ENCODE measurements at regions of chr12 and their contacts with region 1.

Region 1: GRCh38 chr12:1680804-1681492 is 9.9 kb upstream of the ADIPOR2 start:
- DNase-seq: no peak
- H3K4me3 Mint-ChIP-seq: no peak overlapping the region
- H3K27ac Mint-ChIP-seq: no peak overlapping the region
- H3K4me1 Mint-ChIP-seq: no peaks in the 10 kb centered on the region
- H3K27me3 Mint-ChIP-seq: no peaks in the 10 kb centered on the region
- CTCF ChIP-seq: no peak

Region 2: GRCh38 chr12:1605129-1606020 is 75.6 kb before region 1 on chr12:
- CTCF ChIA-PET with region 1: no interaction called
- POLR2A ChIA-PET with region 1: no interaction called
- intact Hi-C with region 1: no loop called
- DNase-seq: peak; percentile 83
- H3K4me3 Mint-ChIP-seq: peak overlapping the region; percentile 77
- H3K27ac Mint-ChIP-seq: peak overlapping the region; percentile 86
- H3K4me1 Mint-ChIP-seq: peaks cover 26% of the 10 kb centered on the region
- H3K27me3 Mint-ChIP-seq: no peaks in the 10 kb centered on the region
- CTCF ChIP-seq: peak; percentile 78

Region 3: DNA sequence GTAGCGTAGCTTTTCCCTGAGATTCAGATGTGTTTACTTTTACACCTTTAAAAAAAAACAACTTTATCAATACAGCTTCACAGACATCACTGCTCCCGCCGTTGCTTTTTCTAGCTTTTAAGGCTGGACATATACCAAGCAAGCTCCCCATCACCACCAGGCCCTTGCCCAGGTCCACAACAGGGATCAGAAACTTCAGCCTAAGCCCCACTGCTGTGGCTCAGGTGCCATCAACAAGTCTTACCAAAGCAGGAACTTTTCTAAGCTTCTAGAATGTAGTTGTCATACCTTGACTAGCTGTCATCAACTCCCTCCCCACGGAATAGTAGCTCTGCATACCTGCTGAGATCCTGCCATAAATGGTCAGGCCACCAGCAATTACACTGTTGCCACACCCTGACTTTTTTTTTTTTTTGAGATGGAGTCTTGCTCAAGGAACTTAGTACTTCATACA is 10.1 kb before region 1 on chr12:
- CTCF ChIA-PET with region 1: interaction called, 5 read pairs
- POLR2A ChIA-PET with region 1: interaction called, 13 read pairs
- intact Hi-C with region 1: no loop called
- DNase-seq: no peak
- H3K4me3 Mint-ChIP-seq: no peak overlapping the region
- H3K27ac Mint-ChIP-seq: no peak overlapping the region
- H3K4me1 Mint-ChIP-seq: no peaks in the 10 kb centered on the region
- H3K27me3 Mint-ChIP-seq: no peaks in the 10 kb centered on the region
- CTCF ChIP-seq: no peak

Region 4: DNA sequence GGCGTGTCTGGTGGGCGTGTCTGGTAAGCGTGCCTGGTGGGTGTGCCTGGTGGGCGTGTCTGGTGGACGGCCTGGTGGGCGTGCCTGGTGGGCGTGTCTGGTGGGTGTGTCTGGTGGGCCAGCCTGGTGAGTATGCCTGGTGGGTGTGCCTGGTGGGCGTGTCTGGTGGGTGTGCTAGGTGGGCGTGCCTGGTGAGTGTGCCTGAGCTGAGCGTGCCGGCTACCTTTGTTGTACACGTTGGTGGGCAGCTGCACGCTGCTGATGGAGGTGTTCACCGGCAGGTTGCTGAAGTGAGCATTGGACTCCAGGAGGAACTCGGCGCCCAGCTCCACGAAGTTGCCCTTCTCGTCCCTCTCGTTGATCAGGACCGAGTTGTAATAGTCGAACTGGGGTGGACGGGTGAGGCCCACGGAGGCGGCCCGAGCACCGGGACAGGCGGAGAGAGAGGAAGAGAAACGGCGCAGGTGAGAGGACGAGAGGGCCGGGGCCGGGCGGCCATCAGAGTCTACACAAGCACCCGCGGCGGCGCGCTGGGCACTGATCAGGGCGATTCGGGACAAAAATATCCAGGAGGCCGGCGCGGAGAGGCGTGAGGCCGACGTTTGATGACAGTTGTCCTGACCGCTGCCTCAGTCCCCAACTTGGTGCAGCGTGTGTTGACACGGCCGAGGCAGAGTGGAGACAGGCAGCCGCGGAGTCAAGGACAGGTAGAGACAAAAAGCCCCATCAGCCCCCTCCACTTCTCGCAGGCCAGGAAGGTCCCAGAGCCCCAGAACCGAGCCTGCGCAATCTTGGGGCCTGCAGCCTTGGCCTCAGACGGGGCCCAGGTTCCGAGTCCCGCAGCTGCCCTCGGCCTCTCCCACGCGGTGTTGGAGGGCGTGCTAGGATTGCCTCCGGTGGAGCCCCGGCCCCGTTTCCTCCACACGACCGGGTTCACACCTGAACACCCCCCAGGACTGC is 227.0 kb after region 1 on chr12:
- CTCF ChIA-PET with region 1: no interaction called
- POLR2A ChIA-PET with region 1: no interaction called
- intact Hi-C with region 1: no loop called
- DNase-seq: no peak
- H3K4me3 Mint-ChIP-seq: no peak overlapping the region
- H3K27ac Mint-ChIP-seq: no peak overlapping the region
- H3K4me1 Mint-ChIP-seq: no peaks in the 10 kb centered on the region
- H3K27me3 Mint-ChIP-seq: no peaks in the 10 kb centered on the region
- CTCF ChIP-seq: no peak

Measured in MCF 10A (cell line).